ENCODE measurements at regions of chr3 and their contacts with region 1.

Region 1: DNA sequence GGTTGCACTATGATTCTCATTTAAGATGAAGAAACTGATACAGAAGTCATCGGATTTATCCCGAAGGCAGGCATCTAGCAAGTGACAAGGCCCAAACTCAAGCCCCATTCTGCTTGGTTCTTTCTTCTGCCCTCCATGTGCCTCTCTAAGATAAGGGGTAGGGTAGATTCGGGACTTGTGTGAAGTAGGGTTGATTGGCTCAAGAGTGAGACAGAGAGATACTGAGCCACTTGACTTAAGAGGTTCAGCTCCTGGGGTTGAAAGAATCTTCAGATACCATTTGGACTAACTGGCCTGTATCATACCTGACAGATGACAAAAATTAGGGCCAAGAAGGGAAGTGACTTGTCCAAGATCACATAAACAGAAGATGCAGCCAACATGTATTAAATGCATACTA is 891 bp downstream of the RFT1 start:
- DNase-seq: no peak
- ATAC-seq: no peak
- H3K4me3 ChIP-seq: peak overlapping the region; percentile 92
- H3K27ac ChIP-seq: peak overlapping the region; percentile 94
- H3K4me1 ChIP-seq: peaks cover 26% of the 10 kb centered on the region
- H3K27me3 ChIP-seq: no peaks in the 10 kb centered on the region
- CTCF ChIP-seq: no peak

Region 2: GRCh38 chr3:53199834-53200233 is 70.5 kb after region 1 on chr3:
- intact Hi-C with region 1: loop called (anchors 5 kb)
- DNase-seq: no peak
- ATAC-seq: no peak
- H3K4me3 ChIP-seq: no peak overlapping the region
- H3K27ac ChIP-seq: no peak overlapping the region
- H3K4me1 ChIP-seq: peaks cover 17% of the 10 kb centered on the region
- H3K27me3 ChIP-seq: no peaks in the 10 kb centered on the region
- CTCF ChIP-seq: no peak